PC-3 (cell line): ENCODE measurements at regions of chr1 and their contacts with region 1.

Region 1: DNA sequence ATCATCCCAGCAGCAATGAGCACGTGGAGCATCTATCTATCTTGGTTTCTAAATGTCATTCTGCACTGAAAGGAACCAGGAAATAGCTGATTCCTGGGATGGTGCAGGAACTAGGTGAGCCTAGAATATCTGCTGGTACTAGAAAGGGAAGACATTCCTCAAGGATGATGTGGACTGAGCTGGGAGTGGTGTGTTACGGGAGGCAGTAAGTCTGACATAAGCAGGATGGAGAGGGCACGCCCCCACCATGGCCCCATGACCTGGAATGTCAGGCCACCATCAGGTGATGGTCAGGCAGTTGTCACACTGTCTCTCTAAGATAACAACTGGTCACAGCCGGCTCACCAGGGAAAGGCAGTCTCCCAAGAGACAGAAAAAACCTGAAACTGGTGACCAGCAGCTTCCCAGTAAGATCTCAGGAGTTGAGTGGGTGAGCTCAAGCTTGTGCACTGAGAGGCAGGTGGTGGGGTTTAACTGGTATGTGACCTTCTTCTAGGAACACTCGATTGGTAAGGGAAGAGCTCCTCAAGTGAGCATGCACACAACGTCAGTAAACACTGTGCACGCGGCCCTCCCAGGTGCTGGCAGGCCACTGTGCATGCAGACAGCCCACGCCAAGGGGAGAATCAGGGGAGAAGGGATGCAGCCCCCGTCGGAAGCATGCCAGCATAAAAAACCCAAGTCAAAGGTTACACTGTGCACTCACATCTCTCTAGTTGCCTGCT is 148.7 kb downstream of the ADSS2 start:
- DNase-seq: peak; percentile 80
- ATAC-seq: peak; percentile 84
- H3K4me3 ChIP-seq: no peak overlapping the region
- H3K27ac ChIP-seq: no peak overlapping the region
- H3K4me1 ChIP-seq: peaks cover 15% of the 10 kb centered on the region
- H3K27me3 ChIP-seq: no peaks in the 10 kb centered on the region
- CTCF ChIP-seq: no peak

Region 2: GRCh38 chr1:243708210-243708609 is 594.8 kb before region 1 on chr1:
- CTCF ChIA-PET with region 1: interaction called, 4 read pairs
- POLR2A ChIA-PET with region 1: no interaction called
- intact Hi-C with region 1: loop called (anchors 1 kb)
- DNase-seq: peak; percentile 50
- ATAC-seq: no peak
- H3K4me3 ChIP-seq: no peak overlapping the region
- H3K27ac ChIP-seq: no peak overlapping the region
- H3K4me1 ChIP-seq: peaks cover 15% of the 10 kb centered on the region
- H3K27me3 ChIP-seq: no peaks in the 10 kb centered on the region
- CTCF ChIP-seq: peak; percentile 86

Region 3: GRCh38 chr1:244239261-244239770 is 63.7 kb before region 1 on chr1:
- CTCF ChIA-PET with region 1: no interaction called
- POLR2A ChIA-PET with region 1: no interaction called
- intact Hi-C with region 1: no loop called
- DNase-seq: no peak
- ATAC-seq: no peak
- H3K4me3 ChIP-seq: no peak overlapping the region
- H3K27ac ChIP-seq: no peak overlapping the region
- H3K4me1 ChIP-seq: no peaks in the 10 kb centered on the region
- H3K27me3 ChIP-seq: peaks cover 9% of the 10 kb centered on the region
- CTCF ChIP-seq: no peak

Region 4: DNA sequence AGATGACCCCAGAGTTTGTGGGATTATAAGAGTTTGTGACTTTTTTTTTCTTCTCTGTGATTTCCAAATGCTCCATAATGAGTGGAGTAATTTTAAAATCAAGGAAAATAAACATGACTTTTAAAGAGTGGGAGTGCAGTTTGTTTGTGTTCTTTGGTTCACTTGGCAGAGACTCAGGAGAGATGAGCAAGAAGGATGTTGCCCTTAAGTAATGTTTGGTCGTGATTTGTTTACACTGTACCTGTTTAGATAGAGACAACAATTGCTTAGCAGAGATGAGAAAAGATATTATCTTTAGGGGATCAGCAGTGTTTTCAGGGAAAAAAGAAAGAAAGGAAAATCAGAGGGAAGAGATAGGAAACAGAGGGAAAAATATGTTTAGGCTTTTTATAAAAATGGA is 22.2 kb before region 1 on chr1:
- CTCF ChIA-PET with region 1: no interaction called
- POLR2A ChIA-PET with region 1: no interaction called
- intact Hi-C with region 1: loop called (anchors 1 kb)
- DNase-seq: peak; percentile 78
- ATAC-seq: peak; percentile 87
- H3K4me3 ChIP-seq: no peak overlapping the region
- H3K27ac ChIP-seq: no peak overlapping the region
- H3K4me1 ChIP-seq: peaks cover 14% of the 10 kb centered on the region
- H3K27me3 ChIP-seq: no peaks in the 10 kb centered on the region
- CTCF ChIP-seq: no peak

Region 5: DNA sequence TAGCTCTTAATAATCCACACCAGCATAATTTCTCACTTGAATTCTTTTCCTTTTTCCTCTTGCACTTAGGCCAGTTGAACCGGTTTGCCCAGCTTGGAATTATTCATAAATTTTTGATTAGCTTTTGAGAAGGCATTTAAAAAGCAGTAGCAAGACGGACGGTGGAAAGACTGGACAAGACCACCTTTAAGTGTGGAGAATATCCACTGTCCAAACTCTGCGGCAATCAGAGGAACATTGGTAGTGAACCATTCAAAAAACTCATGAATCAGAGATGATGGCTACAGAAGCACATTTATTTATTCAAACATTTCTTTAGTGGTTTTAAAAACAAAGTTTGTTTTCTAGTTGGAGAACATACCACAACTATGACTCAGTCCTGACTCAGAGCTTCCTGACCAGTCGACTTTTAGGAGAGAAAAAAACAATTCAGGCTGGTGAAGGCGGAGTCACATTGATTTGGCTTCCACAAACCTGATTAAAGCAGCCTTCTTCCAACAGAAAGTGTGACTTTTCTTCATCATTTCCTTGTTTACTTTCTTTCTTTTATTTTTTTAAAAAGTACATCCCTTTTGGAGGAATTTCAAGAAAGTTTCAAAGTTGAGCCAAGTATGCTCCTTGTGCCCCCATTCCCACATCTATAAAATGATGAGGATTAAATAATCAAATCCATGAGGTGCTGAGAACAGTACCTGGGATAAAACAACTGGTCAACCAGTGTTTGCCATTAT is 19.9 kb after region 1 on chr1:
- CTCF ChIA-PET with region 1: no interaction called
- POLR2A ChIA-PET with region 1: no interaction called
- intact Hi-C with region 1: loop called (anchors 1 kb)
- DNase-seq: peak; percentile 99
- ATAC-seq: peak; percentile 92
- H3K4me3 ChIP-seq: peak overlapping the region; percentile 52
- H3K27ac ChIP-seq: peak overlapping the region; percentile 87
- H3K4me1 ChIP-seq: peaks cover 38% of the 10 kb centered on the region
- H3K27me3 ChIP-seq: no peaks in the 10 kb centered on the region
- CTCF ChIP-seq: no peak